MCF 10A (cell line): ENCODE measurements at regions of chr17 and their contacts with region 1.

Region 1: GRCh38 chr17:2303204-2304188 is at the starts of genes SMG6 and SRR:
- DNase-seq: peak; percentile 92
- H3K4me3 Mint-ChIP-seq: peak within 1 kb of the TSS; percentile 85
- H3K27ac Mint-ChIP-seq: peak within 1 kb of the TSS; percentile 9
- H3K4me1 Mint-ChIP-seq: peaks cover 12% of the 10 kb centered on the region
- H3K27me3 Mint-ChIP-seq: no peaks in the 10 kb centered on the region
- CTCF ChIP-seq: no peak
- total RNA-seq, gene SMG6: 17.0 and 23.2 TPM in 2 replicates
- total RNA-seq, gene SRR: 7.7 and 16.6 TPM in 2 replicates

Region 2: GRCh38 chr17:2292100-2292499 is 11.4 kb before region 1 on chr17:
- CTCF ChIA-PET with region 1: interaction called, 3 read pairs
- POLR2A ChIA-PET with region 1: interaction called, 20 read pairs
- intact Hi-C with region 1: no loop called
- DNase-seq: no peak
- H3K4me3 Mint-ChIP-seq: no peak overlapping the region
- H3K27ac Mint-ChIP-seq: no peak overlapping the region
- H3K4me1 Mint-ChIP-seq: peaks cover 16% of the 10 kb centered on the region
- H3K27me3 Mint-ChIP-seq: no peaks in the 10 kb centered on the region
- CTCF ChIP-seq: no peak

Region 3: DNA sequence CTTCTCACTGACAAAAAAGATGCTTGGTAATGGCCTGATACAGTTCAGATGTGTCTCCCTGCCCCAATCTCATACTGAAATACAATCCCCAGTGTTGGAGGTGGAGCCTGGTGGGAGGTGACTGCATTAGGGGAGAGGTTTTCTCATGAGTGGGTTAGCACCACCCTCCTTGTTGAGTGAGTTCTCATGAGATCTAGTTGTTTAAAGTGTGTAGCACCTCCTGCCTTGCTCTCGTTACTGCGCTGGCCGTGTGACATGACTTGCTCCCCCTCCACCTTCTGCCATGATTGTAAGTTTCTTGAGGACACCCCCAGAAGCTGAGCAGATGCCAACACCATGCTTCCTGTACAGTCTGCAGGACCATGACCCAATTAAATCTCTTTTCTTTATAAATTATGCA is 27.8 kb after region 1 on chr17:
- CTCF ChIA-PET with region 1: interaction called, 6 read pairs
- POLR2A ChIA-PET with region 1: interaction called, 111 read pairs
- intact Hi-C with region 1: no loop called
- DNase-seq: no peak
- H3K4me3 Mint-ChIP-seq: no peak overlapping the region
- H3K27ac Mint-ChIP-seq: no peak overlapping the region
- H3K4me1 Mint-ChIP-seq: peaks cover 8% of the 10 kb centered on the region
- H3K27me3 Mint-ChIP-seq: no peaks in the 10 kb centered on the region
- CTCF ChIP-seq: no peak